B cell (primary cell): ENCODE measurements at regions of chr3 and their contacts with region 1.

Region 1: DNA sequence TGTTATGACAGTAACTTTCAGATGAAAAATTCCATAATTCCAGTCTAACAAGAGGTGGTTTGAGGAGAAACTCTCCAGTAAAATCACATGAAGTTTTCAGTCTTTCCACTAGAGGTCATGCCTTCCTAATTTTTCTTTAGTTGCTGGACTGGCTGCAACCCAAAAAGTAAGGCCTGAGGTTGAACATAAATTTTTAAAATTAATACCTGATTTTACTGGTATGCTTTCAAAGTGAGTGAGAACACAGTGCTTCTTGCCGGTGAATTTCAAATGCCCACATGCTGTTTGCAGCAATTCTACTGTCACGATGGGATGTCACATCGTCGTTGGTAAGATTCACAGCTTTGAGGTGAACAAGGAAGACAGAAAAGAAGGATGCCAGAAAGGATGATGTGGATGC is 89.0 kb upstream of the FGF12 start:
- DNase-seq: peak; percentile 5
- ATAC-seq: no peak
- H3K4me3 ChIP-seq: no peak overlapping the region
- H3K4me3 Mint-ChIP-seq: no peak overlapping the region
- H3K27ac ChIP-seq: no peak overlapping the region
- H3K27ac Mint-ChIP-seq: no peak overlapping the region
- H3K4me1 ChIP-seq: no peaks in the 10 kb centered on the region
- H3K4me1 Mint-ChIP-seq: no peaks in the 10 kb centered on the region
- H3K27me3 ChIP-seq: no peaks in the 10 kb centered on the region
- H3K27me3 Mint-ChIP-seq: peaks cover 18% of the 10 kb centered on the region
- CTCF ChIP-seq: peak; percentile 47

Region 2: DNA sequence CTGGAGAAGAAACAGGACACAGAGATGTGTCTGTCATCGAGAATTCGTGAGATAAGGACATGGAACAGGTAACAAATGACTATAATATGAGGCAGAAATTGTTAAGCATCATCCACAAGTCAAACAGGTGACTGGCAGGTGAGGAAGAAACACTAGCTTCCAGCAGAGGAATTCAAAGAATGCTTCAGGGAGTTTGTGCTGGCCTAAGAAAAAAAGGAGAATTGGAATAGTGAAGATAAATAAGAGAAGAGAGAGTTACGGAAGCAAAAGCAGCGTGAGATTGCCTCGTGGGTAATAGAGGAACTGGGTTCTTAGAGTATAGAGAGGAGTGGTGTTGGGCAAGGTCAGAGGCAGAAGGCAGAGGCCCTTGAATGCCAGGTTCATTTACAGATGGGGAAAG is 66.2 kb before region 1 on chr3:
- CTCF ChIA-PET with region 1: no interaction called
- POLR2A ChIA-PET with region 1: no interaction called
- intact Hi-C with region 1: no loop called
- DNase-seq: no peak
- ATAC-seq: no peak
- H3K4me3 ChIP-seq: no peak overlapping the region
- H3K4me3 Mint-ChIP-seq: no peak overlapping the region
- H3K27ac ChIP-seq: no peak overlapping the region
- H3K27ac Mint-ChIP-seq: no peak overlapping the region
- H3K4me1 ChIP-seq: no peaks in the 10 kb centered on the region
- H3K4me1 Mint-ChIP-seq: no peaks in the 10 kb centered on the region
- H3K27me3 ChIP-seq: no peaks in the 10 kb centered on the region
- H3K27me3 Mint-ChIP-seq: peaks cover 3% of the 10 kb centered on the region
- CTCF ChIP-seq: no peak

Region 3: GRCh38 chr3:193040836-193041672 is 224.7 kb after region 1 on chr3:
- CTCF ChIA-PET with region 1: interaction called, 14 read pairs
- POLR2A ChIA-PET with region 1: no interaction called
- intact Hi-C with region 1: loop called (anchors 1 kb)
- DNase-seq: peak; percentile 24
- ATAC-seq: no peak
- H3K4me3 ChIP-seq: no peak overlapping the region
- H3K4me3 Mint-ChIP-seq: no peak overlapping the region
- H3K27ac ChIP-seq: no peak overlapping the region
- H3K27ac Mint-ChIP-seq: no peak overlapping the region
- H3K4me1 ChIP-seq: no peaks in the 10 kb centered on the region
- H3K4me1 Mint-ChIP-seq: no peaks in the 10 kb centered on the region
- H3K27me3 ChIP-seq: no peaks in the 10 kb centered on the region
- H3K27me3 Mint-ChIP-seq: no peaks in the 10 kb centered on the region
- CTCF ChIP-seq: peak; percentile 24

Region 4: GRCh38 chr3:193572426-193572908 is 756.1 kb after region 1 on chr3:
- CTCF ChIA-PET with region 1: interaction called, 12 read pairs
- POLR2A ChIA-PET with region 1: no interaction called
- intact Hi-C with region 1: no loop called
- DNase-seq: peak; percentile 53
- ATAC-seq: no peak
- H3K4me3 ChIP-seq: no peak overlapping the region
- H3K4me3 Mint-ChIP-seq: no peak overlapping the region
- H3K27ac ChIP-seq: no peak overlapping the region
- H3K27ac Mint-ChIP-seq: no peak overlapping the region
- H3K4me1 ChIP-seq: no peaks in the 10 kb centered on the region
- H3K4me1 Mint-ChIP-seq: peaks cover 2% of the 10 kb centered on the region
- H3K27me3 ChIP-seq: no peaks in the 10 kb centered on the region
- H3K27me3 Mint-ChIP-seq: no peaks in the 10 kb centered on the region
- CTCF ChIP-seq: peak; percentile 83

Region 5: GRCh38 chr3:194404365-194405140 is 1588.2 kb after region 1 on chr3:
- CTCF ChIA-PET with region 1: no interaction called
- POLR2A ChIA-PET with region 1: no interaction called
- intact Hi-C with region 1: loop called (anchors 10 kb)
- DNase-seq: peak; percentile 65
- ATAC-seq: no peak
- H3K4me3 ChIP-seq: no peak overlapping the region
- H3K4me3 Mint-ChIP-seq: no peak overlapping the region
- H3K27ac ChIP-seq: no peak overlapping the region
- H3K27ac Mint-ChIP-seq: no peak overlapping the region
- H3K4me1 ChIP-seq: peaks cover 0 to 6% of the 10 kb centered on the region in 2 donors
- H3K4me1 Mint-ChIP-seq: peaks cover 2% of the 10 kb centered on the region
- H3K27me3 ChIP-seq: peaks cover 0 to 6% (median under 1%) of the 10 kb centered on the region in 4 experiments
- H3K27me3 Mint-ChIP-seq: peaks cover 5% of the 10 kb centered on the region
- CTCF ChIP-seq: peak; percentile 94